A673 (cell line): ENCODE measurements at regions of chr10 and their contacts with region 1.

Region 1: GRCh38 chr10:50874723-50875122 is 10.7 kb downstream of the A1CF start:
- DNase-seq: no peak
- H3K4me3 ChIP-seq: no peak overlapping the region
- H3K27ac ChIP-seq: no peak overlapping the region
- H3K4me1 ChIP-seq: no peaks in the 10 kb centered on the region
- H3K27me3 ChIP-seq: peaks cover 23% of the 10 kb centered on the region
- CTCF ChIP-seq: no peak

Region 2: DNA sequence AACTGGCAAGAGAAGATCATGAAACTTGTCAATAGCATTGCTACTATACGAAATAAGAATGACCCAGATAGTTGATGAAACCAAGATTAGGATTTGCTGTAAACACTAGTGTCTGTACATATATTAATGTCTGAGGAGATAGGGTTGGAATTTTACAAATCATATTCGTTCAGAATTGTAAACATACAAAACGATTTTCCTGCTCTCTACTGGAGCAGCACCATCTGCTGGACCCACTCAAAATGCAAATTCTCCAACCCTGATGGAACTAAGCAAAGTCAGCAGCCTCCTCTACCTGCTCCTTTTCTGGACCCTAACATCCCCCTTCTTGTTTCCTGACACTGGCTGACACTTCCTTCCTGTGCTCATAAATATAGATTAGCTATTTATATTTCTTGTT is 221.6 kb before region 1 on chr10:
- CTCF ChIA-PET with region 1: no interaction called
- POLR2A ChIA-PET with region 1: no interaction called
- intact Hi-C with region 1: no loop called
- DNase-seq: peak; percentile 50
- H3K4me3 ChIP-seq: no peak overlapping the region
- H3K27ac ChIP-seq: no peak overlapping the region
- H3K4me1 ChIP-seq: peaks cover 13% of the 10 kb centered on the region
- H3K27me3 ChIP-seq: no peaks in the 10 kb centered on the region
- CTCF ChIP-seq: peak; percentile 61

Region 3: DNA sequence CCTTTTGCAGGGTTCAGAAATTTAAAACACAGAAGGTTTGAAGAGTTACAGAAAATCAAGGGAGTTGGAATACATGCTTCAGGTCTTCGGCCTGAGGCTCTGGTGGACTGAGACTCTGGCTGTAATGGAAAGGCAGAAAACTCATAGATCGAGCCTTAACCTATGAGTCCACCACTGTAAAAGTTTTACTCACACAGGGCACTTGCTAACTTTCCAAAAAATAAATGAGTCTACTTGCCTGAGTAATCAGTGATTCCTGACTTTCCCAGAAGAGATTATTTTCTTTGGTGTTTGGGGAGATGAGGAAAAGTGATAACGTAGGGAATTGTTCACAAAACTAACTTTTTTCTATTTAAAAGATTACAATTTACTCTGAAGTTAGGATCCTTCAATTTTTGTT is 1789.9 kb after region 1 on chr10:
- CTCF ChIA-PET with region 1: interaction called, 15 read pairs
- POLR2A ChIA-PET with region 1: no interaction called
- intact Hi-C with region 1: no loop called
- DNase-seq: no peak
- H3K4me3 ChIP-seq: no peak overlapping the region
- H3K27ac ChIP-seq: no peak overlapping the region
- H3K4me1 ChIP-seq: peaks cover 4% of the 10 kb centered on the region
- H3K27me3 ChIP-seq: no peaks in the 10 kb centered on the region
- CTCF ChIP-seq: no peak